Tibial artery (tissue), 4 donors: ENCODE measurements at regions of chr2 and their contacts with region 1.

Region 1: GRCh38 chr2:46537624-46538295 is 58.4 kb downstream of the TMEM247 start:
- DNase-seq: no peak
- H3K4me3 ChIP-seq: no peak overlapping the region
- H3K27ac ChIP-seq: no peak overlapping the region
- H3K4me1 ChIP-seq: peaks cover 0 to 18% (median 13%) of the 10 kb centered on the region in 4 donors
- H3K27me3 ChIP-seq: no peaks in the 10 kb centered on the region
- CTCF ChIP-seq: no peak

Region 2: GRCh38 chr2:46504685-46505471 is 32.9 kb before region 1 on chr2:
- intact Hi-C with region 1: loop called (anchors 2 kb)
- DNase-seq: no peak
- H3K4me3 ChIP-seq: no peak overlapping the region
- H3K27ac ChIP-seq: no peak overlapping the region
- H3K4me1 ChIP-seq: peaks cover 0 to 5% (median 0%) of the 10 kb centered on the region in 4 donors
- H3K27me3 ChIP-seq: no peaks in the 10 kb centered on the region
- CTCF ChIP-seq: no peak

Region 3: DNA sequence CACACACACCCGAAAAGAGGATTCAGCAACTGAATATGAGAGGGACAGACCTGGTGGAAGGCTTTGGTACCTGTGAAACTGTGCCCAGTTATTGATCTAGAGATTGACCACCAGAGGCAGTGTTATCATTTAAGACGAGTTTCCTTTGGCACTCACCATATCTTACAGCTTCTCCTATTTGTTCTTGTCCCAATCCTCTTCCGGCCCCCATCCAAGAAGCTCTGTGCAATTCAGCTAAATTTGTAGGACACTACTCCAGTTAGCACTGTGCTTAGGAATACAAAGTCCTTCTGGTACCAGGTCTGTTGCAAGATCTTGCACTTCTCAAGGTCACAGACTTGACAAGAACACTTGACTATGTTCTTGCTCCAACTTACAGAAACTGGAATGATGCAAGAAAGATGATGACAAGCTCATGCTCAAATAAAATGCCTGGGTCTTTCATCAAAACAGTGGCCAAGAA is 119.3 kb after region 1 on chr2:
- intact Hi-C with region 1: no loop called
- DNase-seq: peak; percentile 67 to 82
- H3K4me3 ChIP-seq: no peak overlapping the region
- H3K27ac ChIP-seq: no peak overlapping the region
- H3K4me1 ChIP-seq: peaks cover 0 to 17% (median 11%) of the 10 kb centered on the region in 4 donors
- H3K27me3 ChIP-seq: no peaks in the 10 kb centered on the region
- CTCF ChIP-seq: peak in 1 of 2 experiments; percentile 27

Region 4: GRCh38 chr2:46669996-46670793 is 132.4 kb after region 1 on chr2:
- intact Hi-C with region 1: no loop called
- DNase-seq: no peak
- H3K4me3 ChIP-seq: no peak overlapping the region
- H3K27ac ChIP-seq: no peak overlapping the region
- H3K4me1 ChIP-seq: peaks cover 0 to 6% (median 0%) of the 10 kb centered on the region in 4 donors
- H3K27me3 ChIP-seq: no peaks in the 10 kb centered on the region
- CTCF ChIP-seq: no peak